ENCODE measurements at regions of chr12 and their contacts with region 1.

Region 1: DNA sequence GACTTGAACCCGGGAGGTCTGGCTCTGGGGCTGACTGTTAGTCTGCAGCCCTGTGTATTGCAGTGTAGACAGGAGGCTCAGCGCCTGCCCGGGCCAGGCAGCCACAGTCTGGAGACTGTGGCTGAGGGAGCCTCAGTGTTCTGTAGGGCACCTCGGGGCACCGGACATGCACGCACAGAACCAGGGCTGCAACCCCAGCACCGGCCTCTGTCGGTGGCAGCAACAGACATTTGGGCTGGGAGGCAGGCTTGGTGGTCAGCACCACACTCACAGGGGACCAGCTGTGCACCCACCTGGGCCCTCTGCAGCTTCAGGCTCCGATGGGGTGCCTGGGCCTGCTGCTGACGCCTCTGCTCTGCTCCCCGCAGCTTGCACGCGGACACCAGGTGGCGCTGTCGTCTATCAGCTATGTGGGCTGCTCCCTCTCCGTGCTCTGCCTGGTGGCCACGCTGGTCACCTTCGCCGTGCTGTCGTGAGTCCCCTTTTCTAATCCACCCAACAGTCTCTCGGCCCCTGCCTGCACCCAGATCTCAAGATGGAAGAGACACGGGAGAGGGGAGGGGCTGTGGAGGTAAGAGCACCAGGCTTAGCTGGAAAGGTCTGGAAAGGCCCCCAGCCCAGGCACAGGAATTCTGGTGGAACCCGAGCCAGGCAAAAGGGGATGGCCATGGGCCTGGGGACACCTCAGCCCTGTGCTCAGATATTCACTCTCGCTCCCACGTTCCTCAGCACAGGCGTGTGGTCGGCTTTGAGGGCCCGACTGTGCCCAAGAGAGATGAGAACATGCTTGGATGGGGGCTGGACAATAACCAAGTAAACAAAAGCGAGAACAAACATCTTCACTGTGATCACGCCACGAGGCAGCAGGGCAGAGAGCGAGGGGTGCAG is 151.0 kb downstream of the ADGRD1 start:
- DNase-seq: peak; percentile 79
- H3K4me3 Mint-ChIP-seq: no peak overlapping the region
- H3K27ac Mint-ChIP-seq: no peak overlapping the region
- H3K4me1 Mint-ChIP-seq: peaks cover 7% of the 10 kb centered on the region
- H3K27me3 Mint-ChIP-seq: no peaks in the 10 kb centered on the region

Region 2: GRCh38 chr12:130826149-130826801 is 278.4 kb before region 1 on chr12:
- CTCF ChIA-PET with region 1: interaction called, 11 read pairs
- POLR2A ChIA-PET with region 1: no interaction called
- DNase-seq: peak; percentile 65
- H3K4me3 Mint-ChIP-seq: no peak overlapping the region
- H3K27ac Mint-ChIP-seq: no peak overlapping the region
- H3K4me1 Mint-ChIP-seq: peaks cover 17% of the 10 kb centered on the region
- H3K27me3 Mint-ChIP-seq: no peaks in the 10 kb centered on the region

Region 3: GRCh38 chr12:131087302-131087818 is 17.3 kb before region 1 on chr12:
- CTCF ChIA-PET with region 1: no interaction called
- POLR2A ChIA-PET with region 1: no interaction called
- DNase-seq: no peak
- H3K4me3 Mint-ChIP-seq: no peak overlapping the region
- H3K27ac Mint-ChIP-seq: no peak overlapping the region
- H3K4me1 Mint-ChIP-seq: peaks cover 8% of the 10 kb centered on the region
- H3K27me3 Mint-ChIP-seq: no peaks in the 10 kb centered on the region

Region 4: GRCh38 chr12:131116391-131117117 is 11.8 kb after region 1 on chr12:
- CTCF ChIA-PET with region 1: interaction called, 35 read pairs
- POLR2A ChIA-PET with region 1: no interaction called
- DNase-seq: no peak
- H3K4me3 Mint-ChIP-seq: no peak overlapping the region
- H3K27ac Mint-ChIP-seq: no peak overlapping the region
- H3K4me1 Mint-ChIP-seq: no peaks in the 10 kb centered on the region
- H3K27me3 Mint-ChIP-seq: no peaks in the 10 kb centered on the region

Region 5: GRCh38 chr12:131132118-131132892 is 27.6 kb after region 1 on chr12:
- CTCF ChIA-PET with region 1: interaction called, 86 read pairs
- POLR2A ChIA-PET with region 1: interaction called, 3 read pairs
- DNase-seq: peak; percentile 58
- H3K4me3 Mint-ChIP-seq: no peak overlapping the region
- H3K27ac Mint-ChIP-seq: no peak overlapping the region
- H3K4me1 Mint-ChIP-seq: no peaks in the 10 kb centered on the region
- H3K27me3 Mint-ChIP-seq: no peaks in the 10 kb centered on the region

Region 6: GRCh38 chr12:131454418-131455217 is 349.9 kb after region 1 on chr12:
- CTCF ChIA-PET with region 1: interaction called, 17 read pairs
- POLR2A ChIA-PET with region 1: no interaction called
- DNase-seq: peak; percentile 36
- H3K4me3 Mint-ChIP-seq: no peak overlapping the region
- H3K27ac Mint-ChIP-seq: no peak overlapping the region
- H3K4me1 Mint-ChIP-seq: no peaks in the 10 kb centered on the region
- H3K27me3 Mint-ChIP-seq: peaks cover 17% of the 10 kb centered on the region

Region 7: GRCh38 chr12:131830335-131830913 is 725.7 kb after region 1 on chr12:
- CTCF ChIA-PET with region 1: interaction called, 16 read pairs
- POLR2A ChIA-PET with region 1: no interaction called
- DNase-seq: peak; percentile 52
- H3K4me3 Mint-ChIP-seq: peak overlapping the region; percentile 7
- H3K27ac Mint-ChIP-seq: no peak overlapping the region
- H3K4me1 Mint-ChIP-seq: peaks cover 11% of the 10 kb centered on the region
- H3K27me3 Mint-ChIP-seq: peaks cover 39% of the 10 kb centered on the region